Right lobe of liver (tissue), 6 donors: ENCODE measurements at regions of chr6 and their contacts with region 1.

Region 1: DNA sequence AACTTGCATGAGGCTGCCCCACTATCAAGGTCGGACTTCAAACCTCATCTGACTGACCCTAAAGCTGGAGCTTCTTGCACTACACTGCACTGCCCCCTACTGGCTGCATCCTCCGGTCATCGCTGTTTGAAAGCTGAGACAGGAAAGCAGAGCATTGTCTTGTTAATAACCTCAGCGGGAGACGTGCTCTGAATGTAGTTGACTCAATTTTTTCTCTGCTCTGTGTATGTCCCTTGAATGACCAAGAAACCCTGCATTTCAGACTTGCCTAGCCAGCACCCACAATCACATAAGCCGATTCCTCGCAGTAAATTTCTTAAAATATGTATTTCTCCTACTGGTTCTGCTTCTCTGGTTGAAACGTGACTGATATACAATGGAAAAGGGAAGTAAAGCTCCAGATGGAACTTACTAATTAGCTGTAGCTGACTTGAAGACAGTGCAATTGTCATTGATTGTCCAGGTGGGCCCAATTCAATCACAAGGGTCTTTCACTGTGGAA is 27.8 kb downstream of the TCF21 start:
- DNase-seq: peak; percentile 82 to 88 (median 86)
- ATAC-seq: peak; percentile 95 to 96 (median 96)
- H3K4me3 ChIP-seq: no peak overlapping the region
- H3K27ac ChIP-seq: no peak overlapping the region
- H3K4me1 ChIP-seq: no peaks in the 10 kb centered on the region
- H3K27me3 ChIP-seq: no peaks in the 10 kb centered on the region
- CTCF ChIP-seq: peak; percentile 86 to 91 (median 90)
- POLR2A ChIP-seq: no peak

Region 2: GRCh38 chr6:133568970-133569889 is 347.5 kb before region 1 on chr6:
- intact Hi-C with region 1: loop called in 1 of 2 experiments (anchors 5 kb)
- DNase-seq: no peak
- ATAC-seq: peak; percentile 71 to 95 (median 78)
- H3K4me3 ChIP-seq: peak overlapping the region; percentile 2 to 41 (median 3)
- H3K27ac ChIP-seq: no peak overlapping the region
- H3K4me1 ChIP-seq: peaks cover 0 to 4% (median 0%) of the 10 kb centered on the region in 4 donors
- H3K27me3 ChIP-seq: peaks cover 0 to 3% of the 10 kb centered on the region in 2 donors
- CTCF ChIP-seq: peak; percentile 81 to 90 (median 85)
- POLR2A ChIP-seq: no peak

Region 3: GRCh38 chr6:133837801-133838349 is 78.8 kb before region 1 on chr6:
- intact Hi-C with region 1: no loop called
- DNase-seq: peak; percentile 68 to 74 (median 70)
- ATAC-seq: peak; percentile 97 to 98 (median 98)
- H3K4me3 ChIP-seq: peak overlapping the region; percentile 51 to 61 (median 60)
- H3K27ac ChIP-seq: peak overlapping the region in 1 of 3 donors; percentile 20
- H3K4me1 ChIP-seq: no peaks in the 10 kb centered on the region
- H3K27me3 ChIP-seq: no peaks in the 10 kb centered on the region
- CTCF ChIP-seq: peak; percentile 71 to 95 (median 92)
- POLR2A ChIP-seq: no peak